ENCODE measurements at regions of chr3 and their contacts with region 1.

Region 1: DNA sequence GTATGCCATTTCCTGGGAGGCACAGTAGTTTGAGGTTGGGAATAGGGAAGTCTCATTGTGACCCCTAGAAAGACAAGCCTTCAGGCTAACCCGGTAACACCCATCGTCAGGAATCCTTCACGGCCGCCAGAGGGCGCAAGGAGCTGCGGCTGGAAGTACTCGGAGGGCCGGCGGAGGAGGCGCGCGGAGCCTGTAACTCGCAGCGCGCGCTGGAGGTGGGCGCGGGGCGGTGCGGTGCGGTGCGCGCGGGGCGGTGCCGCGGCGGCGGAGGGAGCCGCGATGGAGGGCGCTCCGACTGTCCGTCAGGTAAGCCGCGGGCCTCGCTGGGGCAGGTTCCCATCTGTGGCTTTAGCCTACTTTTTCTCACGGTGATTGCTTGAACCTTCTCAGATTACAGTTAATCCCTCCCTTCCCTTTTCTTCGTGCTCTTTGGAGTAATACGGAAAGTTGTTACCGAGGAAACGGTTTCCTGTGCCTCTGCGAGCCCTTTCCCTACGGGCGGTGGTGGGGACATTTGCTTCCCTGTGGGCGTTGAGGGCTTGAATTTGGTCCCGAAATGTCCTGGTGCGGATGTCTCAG is at the start of gene GRAMD1C:
- DNase-seq: peak; percentile 70 to 86 (median 83)
- ATAC-seq: peak; percentile 100
- H3K4me3 ChIP-seq: peak within 1 kb of the TSS; percentile 72
- H3K4me3 Mint-ChIP-seq: peak within 1 kb of the TSS; percentile 72 to 85 (median 80)
- H3K27ac ChIP-seq: no peak within 1 kb of the TSS
- H3K27ac Mint-ChIP-seq: peak within 1 kb of the TSS in 5 of 9 donors; percentile 2 to 41 (median 17)
- H3K4me1 ChIP-seq: no peaks in the 10 kb centered on the region
- H3K4me1 Mint-ChIP-seq: peaks cover 0 to 11% (median 5%) of the 10 kb centered on the region in 7 donors
- H3K27me3 ChIP-seq: no peaks in the 10 kb centered on the region
- H3K27me3 Mint-ChIP-seq: peaks cover 0 to 7% (median 4%) of the 10 kb centered on the region in 5 donors
- total RNA-seq, gene GRAMD1C: 0.22 to 0.54 (median 0.28) TPM in 4 of 5 experiments, not detected in the other

Region 2: DNA sequence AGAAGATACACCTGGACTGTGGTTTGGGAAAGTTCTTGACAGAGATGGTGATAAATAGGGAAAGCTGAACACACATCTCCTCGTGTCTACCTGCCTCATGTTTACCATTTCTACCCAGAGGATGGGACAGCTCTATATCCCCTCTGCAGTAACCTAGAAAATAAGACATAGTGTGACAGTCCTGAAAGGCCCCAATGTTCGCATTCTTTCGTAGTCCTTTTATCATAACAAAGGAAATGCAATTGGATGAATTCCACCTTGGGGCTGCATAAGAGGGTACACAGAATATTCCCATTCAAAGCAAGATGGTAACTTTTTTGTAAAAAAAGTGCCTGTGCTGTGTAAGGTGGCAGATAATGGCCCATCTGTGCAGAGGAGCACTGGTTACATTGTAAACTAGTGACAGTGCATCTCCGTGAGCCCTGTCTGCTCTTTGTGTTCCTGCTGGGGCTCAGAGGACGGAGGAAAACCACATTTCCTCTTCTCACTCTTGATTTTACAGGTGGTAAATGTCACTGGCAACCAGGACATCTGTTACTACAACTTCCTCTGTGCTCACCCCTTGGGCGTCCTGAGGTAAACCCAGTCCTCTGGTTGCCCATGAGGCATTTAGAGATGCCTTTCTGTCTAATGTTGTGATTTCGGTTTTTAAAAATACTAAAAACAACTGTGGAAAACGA is 232.0 kb before region 1 on chr3:
- CTCF ChIA-PET with region 1: no interaction called
- POLR2A ChIA-PET with region 1: no interaction called
- intact Hi-C with region 1: no loop called
- DNase-seq: peak in 7 of 9 donors; percentile 32 to 64 (median 58)
- ATAC-seq: peak; percentile 87
- H3K4me3 ChIP-seq: no peak overlapping the region
- H3K4me3 Mint-ChIP-seq: peak overlapping the region; percentile 8 to 77 (median 56)
- H3K27ac ChIP-seq: peak overlapping the region; percentile 0
- H3K27ac Mint-ChIP-seq: peak overlapping the region in 7 of 9 donors; percentile 60 to 83 (median 77)
- H3K4me1 ChIP-seq: peaks cover 12 to 17% of the 10 kb centered on the region in 2 donors
- H3K4me1 Mint-ChIP-seq: peaks cover 21 to 38% (median 34%) of the 10 kb centered on the region in 7 donors
- H3K27me3 ChIP-seq: no peaks in the 10 kb centered on the region
- H3K27me3 Mint-ChIP-seq: no peaks in the 10 kb centered on the region

Region 3: DNA sequence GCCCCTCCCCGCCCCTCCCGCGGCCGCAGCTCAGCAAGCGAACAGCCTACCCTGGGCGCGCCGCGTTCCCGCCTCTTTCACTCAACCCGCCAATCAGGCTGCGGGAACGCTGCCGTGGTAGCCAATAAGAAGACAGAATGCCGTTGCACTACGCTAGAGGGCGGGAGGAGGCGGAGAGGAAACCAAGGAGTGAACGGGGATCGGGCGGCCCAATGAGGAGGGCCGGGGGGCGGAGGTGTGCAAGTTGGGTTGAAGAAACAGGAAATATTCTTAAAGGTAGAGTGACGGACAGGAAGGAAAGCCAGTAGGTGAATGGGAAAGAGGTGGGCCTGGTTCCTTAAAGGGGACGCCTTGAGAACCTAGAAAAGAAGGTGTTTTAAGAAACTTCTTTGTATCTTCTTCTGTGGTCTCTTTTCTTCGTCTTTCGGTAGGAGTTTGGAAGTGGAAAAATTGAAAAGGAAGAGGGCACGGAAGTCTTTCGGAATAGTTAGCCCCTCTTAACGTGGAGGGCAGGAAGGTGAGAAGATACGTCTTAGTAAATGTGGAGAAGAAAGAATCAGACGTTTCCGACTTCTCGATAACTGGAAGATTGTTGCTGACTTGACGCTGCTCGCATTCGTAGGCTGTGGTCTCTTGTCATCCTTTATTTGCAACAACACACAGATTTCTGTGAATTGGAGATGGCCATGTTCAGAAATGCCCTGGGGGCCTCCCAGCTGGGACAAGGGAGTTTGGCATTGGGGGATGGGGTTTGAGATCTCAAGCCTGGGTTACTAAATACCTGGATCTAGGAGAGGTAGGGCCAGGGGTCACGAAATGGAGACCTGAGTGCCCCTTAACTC is 141.8 kb before region 1 on chr3:
- CTCF ChIA-PET with region 1: no interaction called
- POLR2A ChIA-PET with region 1: no interaction called
- intact Hi-C with region 1: loop called in 1 of 2 experiments (anchors 1 kb)
- DNase-seq: peak; percentile 96 to 100 (median 99)
- ATAC-seq: peak; percentile 93
- H3K4me3 ChIP-seq: peak overlapping the region; percentile 82
- H3K4me3 Mint-ChIP-seq: no peak overlapping the region
- H3K27ac ChIP-seq: peak overlapping the region; percentile 99
- H3K27ac Mint-ChIP-seq: no peak overlapping the region
- H3K4me1 ChIP-seq: peaks cover 11 to 27% of the 10 kb centered on the region in 2 donors
- H3K4me1 Mint-ChIP-seq: peaks cover 23 to 36% (median 29%) of the 10 kb centered on the region in 7 donors
- H3K27me3 ChIP-seq: no peaks in the 10 kb centered on the region
- H3K27me3 Mint-ChIP-seq: no peaks in the 10 kb centered on the region

Region 4: DNA sequence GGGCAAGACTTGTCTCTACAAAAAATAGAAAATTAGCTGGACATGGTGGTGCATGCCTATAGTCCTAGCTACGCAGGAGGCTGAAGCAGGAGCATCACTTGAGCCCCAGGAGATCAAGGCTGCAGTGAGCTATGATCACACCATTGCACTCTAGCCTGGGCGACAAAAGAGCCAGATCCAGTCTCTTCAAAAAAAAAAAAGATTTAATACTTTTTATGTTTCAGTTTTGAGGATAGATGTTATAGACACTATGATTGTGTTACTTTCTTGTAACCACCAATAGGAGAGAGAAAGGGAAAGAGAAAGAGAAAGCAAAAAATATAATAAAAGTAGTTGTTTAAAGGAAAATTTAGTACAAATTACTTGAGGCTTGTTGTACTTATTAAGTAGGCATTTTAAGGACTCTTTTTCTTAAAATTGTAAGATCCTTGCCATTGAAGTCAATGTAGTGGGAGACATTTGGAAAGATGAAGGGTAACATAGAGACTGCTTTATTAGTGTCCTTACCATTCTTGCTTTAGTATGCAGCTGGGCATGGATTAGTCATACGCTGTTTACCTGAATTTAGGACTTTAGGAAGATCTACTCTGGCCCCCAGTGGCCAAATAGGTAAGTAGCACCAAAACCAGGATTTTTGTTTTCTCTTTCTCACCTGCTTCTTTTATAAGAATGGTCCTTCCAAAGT is 74.0 kb after region 1 on chr3:
- CTCF ChIA-PET with region 1: interaction called, 7 read pairs
- POLR2A ChIA-PET with region 1: no interaction called
- intact Hi-C with region 1: loop called (anchors 1 kb)
- DNase-seq: peak in 7 of 9 donors; percentile 18 to 50 (median 36)
- ATAC-seq: peak; percentile 91
- H3K4me3 ChIP-seq: no peak overlapping the region
- H3K4me3 Mint-ChIP-seq: peak overlapping the region in 8 of 10 donors; percentile 29 to 75 (median 64)
- H3K27ac ChIP-seq: no peak overlapping the region
- H3K27ac Mint-ChIP-seq: peak overlapping the region in 6 of 9 donors; percentile 5 to 76 (median 58)
- H3K4me1 ChIP-seq: no peaks in the 10 kb centered on the region
- H3K4me1 Mint-ChIP-seq: peaks cover 0 to 7% (median 5%) of the 10 kb centered on the region in 7 donors
- H3K27me3 ChIP-seq: no peaks in the 10 kb centered on the region
- H3K27me3 Mint-ChIP-seq: peaks cover 0 to 15% (median 0%) of the 10 kb centered on the region in 5 donors

Region 5: GRCh38 chr3:113947372-113948014 is 108.8 kb after region 1 on chr3 and contains the start of gene ZDHHC23:
- CTCF ChIA-PET with region 1: no interaction called
- POLR2A ChIA-PET with region 1: no interaction called
- intact Hi-C with region 1: loop called in 1 of 2 experiments (anchors 1 kb)
- DNase-seq: peak; percentile 55 to 82 (median 69)
- ATAC-seq: peak; percentile 92
- H3K4me3 ChIP-seq: peak within 1 kb of the TSS; percentile 62
- H3K4me3 Mint-ChIP-seq: peak within 1 kb of the TSS; percentile 79 to 94 (median 86)
- H3K27ac ChIP-seq: peak within 1 kb of the TSS; percentile 42
- H3K27ac Mint-ChIP-seq: peak within 1 kb of the TSS in 7 of 9 donors; percentile 33 to 81 (median 59)
- H3K4me1 ChIP-seq: peaks cover 0 to 8% of the 10 kb centered on the region in 2 donors
- H3K4me1 Mint-ChIP-seq: peaks cover 8 to 20% (median 13%) of the 10 kb centered on the region in 7 donors
- H3K27me3 ChIP-seq: no peaks in the 10 kb centered on the region
- H3K27me3 Mint-ChIP-seq: peaks cover 9 to 60% (median 14%) of the 10 kb centered on the region in 5 donors
- total RNA-seq, gene ZDHHC23: 2.1 to 3.4 (median 3.2) TPM

Region 6: GRCh38 chr3:114056130-114057010 is 217.7 kb after region 1 on chr3 and contains the starts of genes CCDC191 and QTRT2:
- CTCF ChIA-PET with region 1: no interaction called
- POLR2A ChIA-PET with region 1: no interaction called
- intact Hi-C with region 1: loop called (anchors 1 to 2 kb)
- DNase-seq: peak; percentile 82 to 99 (median 98)
- ATAC-seq: peak; percentile 97
- H3K4me3 ChIP-seq: peak within 1 kb of the TSS; percentile 95
- H3K4me3 Mint-ChIP-seq: peak within 1 kb of the TSS; percentile 91 to 100 (median 98)
- H3K27ac ChIP-seq: peak within 1 kb of the TSS; percentile 91
- H3K27ac Mint-ChIP-seq: peak within 1 kb of the TSS; percentile 87 to 99 (median 97)
- H3K4me1 ChIP-seq: peaks cover 10 to 12% of the 10 kb centered on the region in 2 donors
- H3K4me1 Mint-ChIP-seq: peaks cover 24 to 60% (median 55%) of the 10 kb centered on the region in 7 donors
- H3K27me3 ChIP-seq: no peaks in the 10 kb centered on the region
- H3K27me3 Mint-ChIP-seq: peaks cover 0 to 2% (median 0%) of the 10 kb centered on the region in 5 donors
- total RNA-seq, gene CCDC191: 3.9 to 8.8 (median 5.1) TPM
- total RNA-seq, gene QTRT2: 29.9 to 38.8 (median 33.8) TPM

Region 7: DNA sequence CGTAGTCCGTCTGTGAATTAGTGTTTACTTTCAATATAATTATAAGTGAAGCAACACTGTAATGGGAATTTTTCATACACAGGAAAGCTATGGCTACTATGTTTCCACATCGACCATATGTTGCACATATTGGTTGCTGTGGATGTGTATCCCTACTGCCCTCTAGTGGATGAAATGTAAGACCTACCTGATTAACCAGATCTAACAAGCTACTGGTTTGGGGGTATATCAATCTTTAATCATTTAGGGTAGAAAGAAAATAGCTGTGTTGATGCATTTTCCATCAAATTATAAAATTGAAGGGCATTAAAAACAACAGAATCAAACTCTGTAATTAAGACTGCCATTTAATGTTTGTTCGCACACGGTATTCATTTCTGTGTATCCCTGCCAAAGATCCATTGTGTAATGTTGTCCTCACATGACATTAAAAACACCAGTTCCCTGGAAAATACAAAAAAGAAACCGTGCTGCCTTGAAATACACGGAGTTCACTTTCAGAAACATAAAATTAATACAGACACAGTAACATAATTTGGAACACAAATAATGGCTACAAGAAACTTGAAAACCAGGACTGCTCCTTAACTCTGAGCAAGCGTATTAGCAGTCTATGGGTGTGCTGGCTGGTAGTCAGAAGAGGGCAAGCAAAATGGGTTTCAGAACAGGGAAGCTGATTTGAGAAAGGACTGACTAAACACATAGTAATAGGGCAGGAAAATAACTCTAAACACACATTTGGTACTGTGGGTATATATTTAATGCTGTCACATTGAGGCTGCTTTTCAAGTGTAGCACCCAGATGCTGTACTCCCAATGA is 580.2 kb after region 1 on chr3:
- CTCF ChIA-PET with region 1: no interaction called
- POLR2A ChIA-PET with region 1: no interaction called
- intact Hi-C with region 1: loop called in 1 of 2 experiments (anchors 1 kb)
- DNase-seq: peak in 7 of 9 donors; percentile 40 to 66 (median 57)
- ATAC-seq: peak; percentile 91
- H3K4me3 ChIP-seq: no peak overlapping the region
- H3K4me3 Mint-ChIP-seq: no peak overlapping the region
- H3K27ac ChIP-seq: no peak overlapping the region
- H3K27ac Mint-ChIP-seq: peak overlapping the region in 2 of 9 donors; percentile 26 to 60
- H3K4me1 ChIP-seq: no peaks in the 10 kb centered on the region
- H3K4me1 Mint-ChIP-seq: peaks cover 4 to 18% (median 8%) of the 10 kb centered on the region in 7 donors
- H3K27me3 ChIP-seq: no peaks in the 10 kb centered on the region
- H3K27me3 Mint-ChIP-seq: peaks cover 0 to 2% (median 0%) of the 10 kb centered on the region in 5 donors

Region 8: GRCh38 chr3:115819785-115820384 is 1981.2 kb after region 1 on chr3:
- CTCF ChIA-PET with region 1: no interaction called
- POLR2A ChIA-PET with region 1: no interaction called
- intact Hi-C with region 1: loop called in 1 of 2 experiments (anchors 5 kb)
- DNase-seq: peak in 8 of 9 donors; percentile 26 to 67 (median 62)
- ATAC-seq: peak; percentile 97
- H3K4me3 ChIP-seq: no peak overlapping the region
- H3K4me3 Mint-ChIP-seq: no peak overlapping the region
- H3K27ac ChIP-seq: no peak overlapping the region
- H3K27ac Mint-ChIP-seq: no peak overlapping the region
- H3K4me1 ChIP-seq: no peaks in the 10 kb centered on the region
- H3K4me1 Mint-ChIP-seq: peaks cover 0 to 2% (median 0%) of the 10 kb centered on the region in 7 donors
- H3K27me3 ChIP-seq: no peaks in the 10 kb centered on the region
- H3K27me3 Mint-ChIP-seq: peaks cover 0 to 9% (median 0%) of the 10 kb centered on the region in 5 donors

Measured in naive thymus-derived CD4-positive, alpha-beta T cell (primary cell).